Head of caudate nucleus (tissue), 42 donors: ENCODE measurements at regions of chr17 and their contacts with region 1.

Region 1: DNA sequence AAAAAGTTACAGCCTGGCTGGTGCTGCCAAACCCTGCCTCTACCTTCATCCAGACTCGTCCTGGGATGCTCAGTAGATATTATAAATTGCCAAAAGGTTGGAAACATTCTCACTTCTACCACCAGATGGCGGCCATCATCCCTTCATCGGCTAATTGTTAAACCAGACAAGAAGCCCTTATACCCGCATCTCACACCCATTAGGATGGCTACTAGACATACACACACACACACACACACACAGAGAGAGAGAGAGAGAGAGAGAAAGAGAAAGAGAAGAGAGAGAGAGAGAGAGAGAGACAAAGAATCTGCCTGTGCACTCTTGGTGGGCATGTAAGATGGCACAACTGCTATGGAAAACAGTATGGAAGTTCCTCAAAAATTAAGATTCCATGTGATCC is 15.0 kb upstream of the SCIMP start:
- DNase-seq: peak in 40 of 42 donors; percentile 25 to 89 (median 68)

Region 2: DNA sequence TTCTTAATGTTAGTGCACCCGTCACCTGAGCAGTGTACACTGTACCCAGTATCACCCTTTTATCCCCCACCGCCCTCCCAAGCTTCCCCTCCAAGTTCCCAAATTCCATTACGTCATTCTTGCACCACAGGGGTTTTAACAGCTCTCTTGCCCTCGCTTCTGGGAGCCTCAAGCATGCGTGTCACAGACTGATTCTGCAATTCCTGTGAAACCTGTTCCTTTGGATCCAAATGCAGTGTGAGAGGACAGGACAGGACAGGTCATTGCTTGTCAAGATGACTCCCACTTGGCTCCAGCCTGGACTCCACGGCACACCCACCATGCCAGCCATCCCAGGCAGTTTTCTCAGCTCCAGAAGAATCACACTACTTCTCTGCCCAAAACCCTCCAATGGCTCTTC is 1062.5 kb before region 1 on chr17:
- intact Hi-C with region 1: no loop called
- DNase-seq: no peak

Region 3: GRCh38 chr17:5304636-5305035 is 55.0 kb after region 1 on chr17:
- intact Hi-C with region 1: loop called (anchors 10 kb)
- DNase-seq: no peak